Endothelial cell of umbilical vein (primary cell): ENCODE measurements at regions of chr2 and their contacts with region 1.

Region 1: DNA sequence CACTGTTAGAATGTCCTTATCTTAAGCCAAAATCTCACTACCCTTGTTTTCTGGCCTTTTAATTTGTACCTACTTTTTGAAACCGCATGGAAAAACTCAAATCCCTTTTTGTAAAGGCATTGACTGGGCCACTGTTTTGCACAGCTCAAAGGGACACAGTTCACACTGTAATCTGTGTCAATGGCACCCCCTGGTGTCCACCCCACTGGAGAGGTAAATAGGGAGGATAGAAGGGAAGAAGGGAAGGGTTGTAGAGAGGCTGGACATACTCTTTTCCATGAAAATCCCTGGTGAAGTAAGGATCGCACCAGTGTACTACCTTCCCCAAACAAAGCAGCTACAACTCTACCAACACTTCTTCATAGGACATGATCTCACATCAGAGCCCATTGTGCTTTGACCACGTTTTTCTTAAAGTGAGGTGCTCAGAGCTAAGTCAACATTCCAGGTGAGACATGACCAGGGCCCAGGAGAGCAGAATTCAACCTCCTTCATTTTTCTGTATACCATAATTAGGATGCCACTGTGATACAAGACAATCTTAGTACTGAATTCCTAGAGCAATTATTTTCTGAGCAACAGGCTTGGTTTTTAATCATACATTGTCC is 92.4 kb upstream of the RMDN2 start:
- DNase-seq: peak; percentile 85
- H3K4me3 ChIP-seq: no peak overlapping the region
- H3K27ac ChIP-seq: no peak overlapping the region
- H3K4me1 ChIP-seq: peaks cover 30% of the 10 kb centered on the region
- H3K27me3 ChIP-seq: no peaks in the 10 kb centered on the region
- CTCF ChIP-seq: peak; percentile 71 to 77
- POLR2A ChIP-seq: no peak

Region 2: DNA sequence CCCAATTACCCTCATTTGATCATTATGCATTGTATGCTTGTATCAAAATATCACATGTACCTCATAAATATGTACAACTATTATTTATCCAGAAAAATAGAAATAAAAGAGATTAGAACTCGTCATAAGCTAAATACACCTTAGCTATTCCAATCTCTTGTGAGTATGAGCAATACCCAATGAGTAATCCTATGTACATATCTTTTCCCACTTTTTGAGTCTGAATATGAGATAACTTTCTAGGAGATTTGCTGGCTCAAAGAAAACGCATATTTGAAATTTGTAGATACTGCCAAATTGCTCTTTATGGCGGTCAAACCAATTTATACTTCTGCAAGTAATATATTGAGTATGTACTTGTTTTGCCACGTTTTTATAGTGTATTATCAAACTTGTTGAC is 532.1 kb before region 1 on chr2:
- CTCF ChIA-PET with region 1: no interaction called
- POLR2A ChIA-PET with region 1: no interaction called
- dilution Hi-C with region 1: no loop called
- intact Hi-C with region 1: no loop called
- DNase-seq: no peak
- H3K4me3 ChIP-seq: no peak overlapping the region
- H3K27ac ChIP-seq: no peak overlapping the region
- H3K4me1 ChIP-seq: no peaks in the 10 kb centered on the region
- H3K27me3 ChIP-seq: no peaks in the 10 kb centered on the region
- CTCF ChIP-seq: no peak
- POLR2A ChIP-seq: no peak

Region 3: GRCh38 chr2:37421686-37422085 is 411.0 kb before region 1 on chr2:
- CTCF ChIA-PET with region 1: interaction called, 506 read pairs
- POLR2A ChIA-PET with region 1: no interaction called
- dilution Hi-C with region 1: no loop called
- intact Hi-C with region 1: no loop called
- DNase-seq: no peak
- H3K4me3 ChIP-seq: no peak overlapping the region
- H3K27ac ChIP-seq: no peak overlapping the region
- H3K4me1 ChIP-seq: no peaks in the 10 kb centered on the region
- H3K27me3 ChIP-seq: no peaks in the 10 kb centered on the region
- CTCF ChIP-seq: no peak
- POLR2A ChIP-seq: no peak

Region 4: GRCh38 chr2:37549598-37549997 is 283.1 kb before region 1 on chr2:
- CTCF ChIA-PET with region 1: interaction called, 6 read pairs
- POLR2A ChIA-PET with region 1: no interaction called
- dilution Hi-C with region 1: no loop called
- intact Hi-C with region 1: loop called (anchors 1 kb)
- DNase-seq: no peak
- H3K4me3 ChIP-seq: no peak overlapping the region
- H3K27ac ChIP-seq: no peak overlapping the region
- H3K4me1 ChIP-seq: no peaks in the 10 kb centered on the region
- H3K27me3 ChIP-seq: no peaks in the 10 kb centered on the region
- CTCF ChIP-seq: no peak
- POLR2A ChIP-seq: no peak

Region 5: GRCh38 chr2:37648331-37649011 is 184.2 kb before region 1 on chr2:
- CTCF ChIA-PET with region 1: interaction called, 22 read pairs
- POLR2A ChIA-PET with region 1: no interaction called
- dilution Hi-C with region 1: no loop called
- intact Hi-C with region 1: loop called (anchors 2 kb)
- DNase-seq: peak; percentile 80
- H3K4me3 ChIP-seq: no peak overlapping the region
- H3K27ac ChIP-seq: peak overlapping the region; percentile 68
- H3K4me1 ChIP-seq: peaks cover 80% of the 10 kb centered on the region
- H3K27me3 ChIP-seq: no peaks in the 10 kb centered on the region
- CTCF ChIP-seq: peak; percentile 33 to 41
- POLR2A ChIP-seq: no peak

Region 6: DNA sequence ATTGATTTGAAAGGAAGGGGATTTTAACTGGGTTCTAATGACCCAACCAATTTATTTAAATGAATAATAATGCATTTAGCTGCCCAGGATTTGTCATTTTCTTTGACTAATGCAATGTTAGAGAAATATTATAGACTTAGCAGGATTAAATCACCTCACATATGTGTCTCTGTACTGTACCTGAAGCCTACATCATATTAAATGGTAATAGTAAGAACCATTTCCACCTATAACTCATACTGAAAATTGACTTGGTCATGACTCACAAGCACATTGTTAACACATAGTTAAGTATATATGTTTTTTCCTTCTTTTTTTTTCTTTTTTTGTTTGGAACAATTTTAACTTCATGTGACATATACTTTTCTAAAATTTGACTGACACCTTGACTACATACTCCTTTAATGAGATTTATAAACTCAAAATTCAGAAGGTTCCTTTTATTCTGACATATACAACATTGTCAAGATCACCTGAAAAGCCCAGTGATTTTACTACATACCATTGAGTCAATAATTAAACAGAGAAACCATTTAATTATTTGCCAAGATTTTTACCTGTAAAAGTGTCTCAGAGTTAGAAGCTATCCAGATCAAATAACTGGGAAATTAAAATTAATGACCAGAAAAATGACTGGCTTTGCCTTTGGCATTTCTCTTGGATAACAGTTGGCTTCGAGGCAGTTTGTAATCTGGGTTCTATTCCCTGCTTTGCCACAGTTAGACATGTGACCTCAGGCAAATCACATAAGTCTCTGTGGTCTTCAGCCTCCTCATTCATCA is 102.5 kb before region 1 on chr2:
- CTCF ChIA-PET with region 1: no interaction called
- POLR2A ChIA-PET with region 1: no interaction called
- dilution Hi-C with region 1: no loop called
- intact Hi-C with region 1: no loop called
- DNase-seq: no peak
- H3K4me3 ChIP-seq: no peak overlapping the region
- H3K27ac ChIP-seq: no peak overlapping the region
- H3K4me1 ChIP-seq: no peaks in the 10 kb centered on the region
- H3K27me3 ChIP-seq: no peaks in the 10 kb centered on the region
- CTCF ChIP-seq: no peak
- POLR2A ChIP-seq: no peak

Region 7: DNA sequence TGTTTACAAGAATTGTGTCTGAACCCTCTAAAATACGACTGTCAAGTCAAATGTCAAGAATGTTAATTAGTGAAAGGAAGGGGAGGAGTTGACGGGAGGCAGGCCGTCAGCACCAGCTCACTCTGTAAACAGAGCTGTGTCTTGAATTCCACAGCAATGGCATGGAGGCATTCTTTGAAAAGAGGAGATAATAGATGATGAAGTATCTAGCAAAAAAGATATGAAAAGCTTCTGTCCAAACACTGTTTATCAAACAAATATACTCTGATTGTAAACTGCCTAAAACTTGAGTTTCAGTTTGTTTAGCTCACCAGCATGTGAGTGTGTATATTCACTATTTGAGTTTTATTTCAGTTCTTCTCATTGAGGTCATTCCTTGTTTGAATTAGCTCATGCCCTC is 66.6 kb before region 1 on chr2:
- CTCF ChIA-PET with region 1: interaction called, 10 read pairs
- POLR2A ChIA-PET with region 1: no interaction called
- dilution Hi-C with region 1: no loop called
- intact Hi-C with region 1: no loop called
- DNase-seq: peak; percentile 40
- H3K4me3 ChIP-seq: no peak overlapping the region
- H3K27ac ChIP-seq: peak overlapping the region; percentile 26
- H3K4me1 ChIP-seq: peaks cover 15% of the 10 kb centered on the region
- H3K27me3 ChIP-seq: no peaks in the 10 kb centered on the region
- CTCF ChIP-seq: no peak
- POLR2A ChIP-seq: no peak